ENCODE measurements at regions of chr10 and their contacts with region 1.

Region 1: GRCh38 chr10:30783939-30784500 is 154.5 kb upstream of the LYZL2 start:
- DNase-seq: peak; percentile 82
- ATAC-seq: peak; percentile 80
- H3K4me3 ChIP-seq: peak overlapping the region; percentile 42 to 80 (median 63)
- H3K4me3 Mint-ChIP-seq: peak overlapping the region; percentile 77
- H3K27ac ChIP-seq: no peak overlapping the region
- H3K27ac Mint-ChIP-seq: no peak overlapping the region
- H3K4me1 ChIP-seq: peaks cover 0 to 16% of the 10 kb centered on the region in 2 donors
- H3K4me1 Mint-ChIP-seq: peaks cover 11% of the 10 kb centered on the region
- H3K27me3 ChIP-seq: peaks cover 0 to 16% (median 4%) of the 10 kb centered on the region in 4 experiments
- H3K27me3 Mint-ChIP-seq: peaks cover 10% of the 10 kb centered on the region
- CTCF ChIP-seq: peak; percentile 73

Region 2: GRCh38 chr10:31490858-31491504 is 707.0 kb after region 1 on chr10:
- CTCF ChIA-PET with region 1: interaction called, 13 read pairs
- POLR2A ChIA-PET with region 1: no interaction called
- intact Hi-C with region 1: loop called (anchors 2 kb)
- DNase-seq: peak; percentile 40
- ATAC-seq: no peak
- H3K4me3 ChIP-seq: no peak overlapping the region
- H3K4me3 Mint-ChIP-seq: no peak overlapping the region
- H3K27ac ChIP-seq: no peak overlapping the region
- H3K27ac Mint-ChIP-seq: no peak overlapping the region
- H3K4me1 ChIP-seq: no peaks in the 10 kb centered on the region
- H3K4me1 Mint-ChIP-seq: no peaks in the 10 kb centered on the region
- H3K27me3 ChIP-seq: no peaks in the 10 kb centered on the region
- H3K27me3 Mint-ChIP-seq: no peaks in the 10 kb centered on the region
- CTCF ChIP-seq: peak; percentile 51

Region 3: DNA sequence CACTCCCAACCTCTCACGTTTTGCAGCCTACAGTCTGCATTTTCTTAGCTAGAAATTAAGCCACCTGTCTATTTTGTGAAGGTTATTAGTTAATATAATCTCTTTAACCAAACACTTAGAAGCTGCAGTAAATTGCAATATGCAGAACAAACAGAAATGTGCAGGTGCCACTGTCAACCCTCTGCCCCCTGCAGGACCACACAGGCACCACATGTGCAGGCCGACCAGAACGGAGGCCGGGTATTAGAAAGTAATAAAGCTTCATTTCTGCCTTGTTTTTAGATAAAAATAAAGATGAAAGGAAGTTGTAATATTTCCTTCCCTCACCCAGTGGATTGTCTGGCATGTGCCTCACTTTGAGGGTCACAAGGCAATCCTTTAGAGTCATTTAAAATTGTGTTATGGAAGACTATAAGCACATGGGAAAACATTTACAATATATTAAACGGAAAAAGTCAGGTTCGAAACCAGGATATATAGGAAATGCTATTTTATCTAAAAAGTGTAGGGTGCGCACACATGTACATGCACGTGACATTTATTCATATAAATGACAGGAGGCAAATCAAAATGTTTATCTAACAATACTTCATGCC is 986.4 kb after region 1 on chr10:
- CTCF ChIA-PET with region 1: interaction called, 90 read pairs
- POLR2A ChIA-PET with region 1: no interaction called
- intact Hi-C with region 1: loop called (anchors 1 kb)
- DNase-seq: peak; percentile 61
- ATAC-seq: peak; percentile 94
- H3K4me3 ChIP-seq: no peak overlapping the region
- H3K4me3 Mint-ChIP-seq: no peak overlapping the region
- H3K27ac ChIP-seq: no peak overlapping the region
- H3K27ac Mint-ChIP-seq: no peak overlapping the region
- H3K4me1 ChIP-seq: no peaks in the 10 kb centered on the region
- H3K4me1 Mint-ChIP-seq: no peaks in the 10 kb centered on the region
- H3K27me3 ChIP-seq: no peaks in the 10 kb centered on the region
- H3K27me3 Mint-ChIP-seq: no peaks in the 10 kb centered on the region
- CTCF ChIP-seq: peak; percentile 95